Right ventricle myocardium inferior (tissue), 1 donor: ENCODE measurements at regions of chr17 and their contacts with region 1.

Region 1: GRCh38 chr17:63406689-63407330 is 39.3 kb downstream of the CYB561 start:
- DNase-seq: no peak
- ATAC-seq: peak; percentile 82

Region 2: DNA sequence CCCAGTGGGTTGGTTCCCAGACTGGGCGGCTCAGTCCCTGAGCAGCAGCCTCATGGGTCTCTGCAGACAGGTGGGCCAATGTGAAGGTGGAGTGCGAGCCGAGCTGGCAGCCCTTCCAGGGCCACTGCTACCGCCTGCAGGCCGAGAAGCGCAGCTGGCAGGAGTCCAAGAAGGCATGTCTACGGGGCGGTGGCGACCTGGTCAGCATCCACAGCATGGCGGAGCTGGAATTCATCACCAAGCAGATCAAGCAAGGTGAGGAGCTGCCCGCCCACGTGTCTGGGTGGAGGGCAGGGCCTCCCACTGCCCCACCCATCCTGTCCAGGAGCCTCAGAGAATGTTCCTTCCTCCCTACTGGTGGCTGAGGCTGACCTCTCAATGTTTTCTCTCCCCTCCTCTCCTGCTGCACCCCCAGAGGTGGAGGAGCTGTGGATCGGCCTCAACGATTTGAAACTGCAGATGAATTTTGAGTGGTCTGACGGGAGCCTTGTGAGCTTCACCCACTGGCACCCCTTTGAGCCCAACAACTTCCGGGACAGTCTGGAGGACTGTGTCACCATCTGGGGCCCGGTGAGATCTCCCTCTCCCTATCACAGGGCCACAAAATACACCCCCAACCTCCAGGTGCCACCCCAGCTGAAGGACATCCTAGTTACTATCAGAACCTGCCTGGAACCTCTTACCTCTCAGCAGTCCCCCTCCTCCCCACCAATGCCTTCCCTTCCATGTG is 735.1 kb before region 1 on chr17:
- intact Hi-C with region 1: loop called (anchors 10 kb)
- DNase-seq: peak; percentile 63
- ATAC-seq: no peak

Region 3: GRCh38 chr17:62703775-62704378 is 702.9 kb before region 1 on chr17:
- intact Hi-C with region 1: loop called (anchors 2 kb)
- DNase-seq: peak; percentile 89
- ATAC-seq: peak; percentile 92

Region 4: DNA sequence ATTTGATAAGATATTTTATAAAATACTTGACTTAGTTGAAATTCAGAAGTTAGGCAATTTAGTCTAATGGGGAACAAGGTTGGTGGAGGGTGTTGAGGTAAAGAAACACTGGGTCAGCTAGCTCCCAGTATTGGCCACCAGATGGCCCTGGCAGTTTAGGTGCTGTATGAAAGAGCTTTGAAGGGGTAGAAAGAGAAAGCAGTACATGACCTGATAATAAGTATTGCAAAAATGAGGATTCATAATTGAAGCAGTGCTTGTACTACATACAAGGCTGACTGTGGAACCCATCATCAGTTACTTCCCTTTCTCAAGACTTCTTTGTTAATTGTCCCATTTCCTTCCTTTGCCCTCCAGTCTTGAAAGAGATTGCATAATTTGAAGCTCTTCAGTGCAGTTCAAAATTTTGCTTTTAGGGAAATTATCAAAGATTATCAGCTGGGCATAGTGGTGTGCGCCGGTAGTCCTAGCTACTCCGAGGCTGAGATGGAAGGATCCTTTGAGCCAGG is 411.4 kb before region 1 on chr17:
- intact Hi-C with region 1: loop called (anchors 5 kb)
- DNase-seq: no peak
- ATAC-seq: peak; percentile 42